ENCODE measurements at regions of chr10 and their contacts with region 1.

Region 1: GRCh38 chr10:89795840-89796239 is 94.5 kb downstream of the KIF20B start:
- DNase-seq: no peak
- CTCF ChIP-seq: no peak

Region 2: DNA sequence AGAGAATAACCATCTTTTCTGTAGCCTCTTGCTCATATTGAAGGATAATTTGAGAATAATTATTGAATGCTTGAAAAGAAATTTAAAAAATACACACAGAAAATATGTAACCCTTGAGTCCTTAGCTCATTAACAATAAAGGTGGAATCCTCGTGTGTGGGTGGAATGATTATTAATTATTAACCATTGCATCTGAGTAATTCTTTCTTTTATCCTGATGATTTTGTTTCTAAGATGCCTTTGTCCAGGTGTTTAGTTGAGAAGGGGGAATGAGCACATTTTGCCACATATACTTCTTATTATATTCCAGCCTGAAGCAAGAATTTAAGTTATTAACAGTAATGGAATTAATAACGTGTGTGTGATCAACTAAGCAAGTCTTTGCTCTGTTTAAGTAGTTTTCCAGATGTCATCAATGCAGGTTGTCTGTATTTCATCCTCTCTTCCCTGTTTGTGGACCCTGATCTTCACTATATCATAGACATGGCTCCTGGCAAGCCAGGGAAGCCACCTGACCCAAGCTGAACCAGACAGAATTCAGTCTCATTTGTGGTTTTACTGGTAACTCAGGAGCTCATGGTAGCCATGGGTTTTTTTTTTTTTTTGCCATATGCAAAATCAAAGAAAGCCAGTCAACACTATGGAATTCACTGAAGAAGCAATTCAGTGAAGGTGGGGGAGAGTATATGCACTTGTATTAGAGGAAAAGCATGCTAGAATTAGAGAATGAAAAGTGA is 49.9 kb after region 1 on chr10:
- CTCF ChIA-PET with region 1: no interaction called
- POLR2A ChIA-PET with region 1: no interaction called
- DNase-seq: no peak
- CTCF ChIP-seq: no peak

Region 3: DNA sequence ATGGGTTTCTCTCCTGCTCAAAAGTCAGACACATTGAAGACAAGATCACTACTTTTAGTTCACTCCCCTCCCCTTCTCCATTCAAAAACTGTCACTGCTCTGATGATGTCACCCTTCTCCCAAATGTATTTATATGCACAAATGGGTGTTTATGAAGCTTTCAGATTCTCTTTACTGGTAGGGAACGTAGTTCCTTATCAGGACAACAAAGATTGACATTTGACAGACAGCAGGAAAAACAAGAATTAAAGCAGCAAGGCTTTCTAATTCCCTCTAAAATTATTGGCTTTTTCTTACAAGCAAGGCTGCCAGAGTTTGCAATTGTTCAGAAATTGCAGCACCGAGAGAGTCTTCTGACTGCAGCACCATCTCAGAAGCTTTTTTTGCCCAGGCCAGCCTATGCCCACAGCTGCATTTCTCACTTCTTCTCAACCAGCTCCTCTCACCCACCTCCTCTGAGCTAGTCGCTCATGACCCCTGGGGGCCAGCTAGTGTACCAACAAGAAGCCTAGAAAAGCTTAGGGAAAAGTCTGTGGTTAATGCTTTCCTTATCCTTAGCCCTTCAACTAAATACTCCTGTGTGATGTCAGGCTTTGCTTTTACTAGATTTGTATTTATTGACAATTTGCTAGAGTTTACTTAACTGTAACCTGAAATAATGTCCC is 796.9 kb after region 1 on chr10:
- CTCF ChIA-PET with region 1: interaction called, 10 read pairs
- POLR2A ChIA-PET with region 1: no interaction called
- DNase-seq: peak; percentile 17
- CTCF ChIP-seq: peak; percentile 36